AG04450 (cell line): ENCODE measurements at regions of chr2 and their contacts with region 1.

Region 1: GRCh38 chr2:134118279-134119116 is 135.4 kb upstream of the MGAT5 start:
- DNase-seq: peak; percentile 90
- H3K4me3 ChIP-seq: no peak overlapping the region
- H3K27ac ChIP-seq: peak overlapping the region; percentile 69
- H3K27me3 ChIP-seq: no peaks in the 10 kb centered on the region
- CTCF ChIP-seq: peak; percentile 81

Region 2: GRCh38 chr2:133886735-133887660 is 231.5 kb before region 1 on chr2:
- CTCF ChIA-PET with region 1: interaction called, 91 read pairs
- POLR2A ChIA-PET with region 1: interaction called, 19 read pairs
- DNase-seq: peak; percentile 77
- H3K4me3 ChIP-seq: no peak overlapping the region; the same call in 1 of the 2 replicates
- H3K27ac ChIP-seq: peak overlapping the region; percentile 75
- H3K27me3 ChIP-seq: peaks cover 3% of the 10 kb centered on the region
- CTCF ChIP-seq: peak; percentile 75

Region 3: GRCh38 chr2:134014196-134014960 is 104.1 kb before region 1 on chr2:
- CTCF ChIA-PET with region 1: no interaction called
- POLR2A ChIA-PET with region 1: interaction called, 10 read pairs
- DNase-seq: peak; percentile 68
- H3K4me3 ChIP-seq: no peak overlapping the region
- H3K27ac ChIP-seq: peak overlapping the region; percentile 77
- H3K27me3 ChIP-seq: no peaks in the 10 kb centered on the region
- CTCF ChIP-seq: no peak

Region 4: GRCh38 chr2:134275058-134275862 is 156.8 kb after region 1 on chr2:
- CTCF ChIA-PET with region 1: no interaction called
- POLR2A ChIA-PET with region 1: no interaction called
- DNase-seq: no peak
- H3K4me3 ChIP-seq: no peak overlapping the region
- H3K27ac ChIP-seq: no peak overlapping the region
- H3K27me3 ChIP-seq: no peaks in the 10 kb centered on the region
- CTCF ChIP-seq: no peak

Region 5: DNA sequence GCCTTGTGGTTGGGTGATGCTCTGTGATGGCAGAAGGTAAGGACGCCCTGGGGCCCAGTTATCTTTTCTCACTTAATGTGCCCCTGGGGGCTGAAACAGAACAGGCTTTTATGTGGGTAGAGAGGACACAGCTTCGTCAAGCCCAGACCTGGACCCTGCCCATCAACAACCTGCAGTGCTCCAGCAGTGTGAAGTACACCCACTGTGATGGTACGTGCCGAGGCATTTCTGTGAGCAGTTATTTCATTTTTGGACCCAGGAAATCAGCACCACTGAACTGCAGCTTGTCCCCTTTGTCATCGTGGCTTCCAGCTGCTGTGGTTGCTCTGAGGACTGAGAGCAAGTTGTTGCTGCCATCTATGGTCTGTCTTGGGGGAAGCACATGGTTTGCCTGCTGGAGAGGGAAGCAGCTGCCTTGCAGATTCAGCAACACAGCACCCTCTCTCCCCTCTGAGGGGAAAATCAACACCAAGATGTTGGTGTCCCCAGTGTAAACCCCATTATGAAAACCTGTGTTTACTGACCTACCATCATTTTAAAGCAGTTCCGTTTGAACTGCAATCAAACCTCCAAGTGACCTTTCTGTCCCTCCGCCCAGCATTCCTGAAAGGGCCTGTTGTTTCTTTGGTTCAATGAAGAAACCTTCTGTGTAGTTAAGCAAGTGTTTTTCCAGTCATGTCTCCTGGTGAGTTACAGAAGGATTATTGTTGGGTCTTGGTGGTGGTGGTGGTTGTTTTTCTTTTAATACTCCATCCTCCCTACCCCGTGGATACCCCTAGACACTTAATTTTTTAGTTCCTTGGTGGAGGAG is 293.5 kb after region 1 on chr2:
- CTCF ChIA-PET with region 1: interaction called, 60 read pairs
- POLR2A ChIA-PET with region 1: interaction called, 8 read pairs
- DNase-seq: no peak
- H3K4me3 ChIP-seq: no peak overlapping the region
- H3K27ac ChIP-seq: peak overlapping the region; percentile 4
- H3K27me3 ChIP-seq: no peaks in the 10 kb centered on the region
- CTCF ChIP-seq: peak; percentile 77

Region 6: GRCh38 chr2:134431838-134432434 is 313.4 kb after region 1 on chr2:
- CTCF ChIA-PET with region 1: interaction called, 11 read pairs
- POLR2A ChIA-PET with region 1: no interaction called
- DNase-seq: no peak
- H3K4me3 ChIP-seq: no peak overlapping the region
- H3K27ac ChIP-seq: peak overlapping the region; percentile 41
- H3K27me3 ChIP-seq: no peaks in the 10 kb centered on the region
- CTCF ChIP-seq: no peak

Region 7: GRCh38 chr2:134446383-134447017 is 328.0 kb after region 1 on chr2:
- CTCF ChIA-PET with region 1: interaction called, 72 read pairs
- POLR2A ChIA-PET with region 1: interaction called, 3 read pairs
- DNase-seq: peak; percentile 6
- H3K4me3 ChIP-seq: no peak overlapping the region
- H3K27ac ChIP-seq: no peak overlapping the region
- H3K27me3 ChIP-seq: no peaks in the 10 kb centered on the region
- CTCF ChIP-seq: no peak